Right ventricle myocardium superior (tissue), 1 donor: ENCODE measurements at regions of chr2 and their contacts with region 1.

Region 1: DNA sequence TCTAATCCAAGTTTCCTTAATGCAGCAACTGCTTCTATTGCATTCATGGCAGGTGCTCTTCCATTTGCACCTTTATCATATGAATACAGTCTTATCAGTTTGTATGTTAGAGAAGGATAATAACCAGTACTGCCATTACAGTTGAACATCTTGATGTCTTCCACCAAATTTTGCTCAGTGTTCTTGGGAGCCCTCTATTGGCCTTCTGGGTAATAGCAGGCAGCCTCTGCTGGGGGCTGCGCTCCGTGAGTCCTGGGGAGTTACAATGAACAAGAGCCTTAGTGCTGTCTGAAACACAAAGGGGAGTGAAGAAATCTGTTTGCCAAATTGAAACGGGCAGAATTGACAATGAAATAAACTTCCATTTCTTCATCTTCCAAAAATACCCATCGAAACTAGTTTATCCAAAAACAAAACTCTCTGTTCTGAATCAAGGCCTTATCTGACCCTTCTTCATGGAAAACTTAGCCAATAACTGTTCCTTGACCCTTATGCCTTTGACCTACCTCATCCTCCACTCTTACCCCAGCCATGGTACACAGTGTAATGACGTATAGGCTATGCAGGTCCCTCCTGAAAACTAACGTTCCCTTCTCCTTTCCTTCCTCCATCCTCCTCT is 79.9 kb downstream of the ALK start:
- DNase-seq: no peak
- ATAC-seq: peak; percentile 43

Region 2: DNA sequence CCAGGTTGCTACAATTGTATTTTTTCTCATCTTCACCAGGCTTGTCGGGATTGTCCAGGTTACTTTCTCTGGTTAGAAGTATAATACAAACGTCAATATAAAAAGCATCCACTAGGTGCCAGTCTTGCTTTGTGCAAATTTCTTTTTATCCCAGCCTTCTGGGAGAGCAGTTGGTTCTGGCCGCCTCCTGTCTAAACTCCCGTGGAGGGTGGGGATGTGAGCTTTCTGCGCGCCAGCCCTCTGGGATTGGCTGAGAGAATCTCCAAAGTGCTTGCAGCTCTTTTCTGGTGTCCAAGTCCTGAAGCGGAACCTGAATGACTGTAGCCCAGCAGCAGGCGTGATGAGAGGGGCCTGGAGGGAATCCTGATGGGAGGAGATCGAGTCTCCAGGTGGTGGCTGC is 882.8 kb before region 1 on chr2:
- intact Hi-C with region 1: loop called (anchors 5 kb)
- DNase-seq: peak; percentile 72
- ATAC-seq: peak; percentile 93

Region 3: GRCh38 chr2:29309090-29310029 is 532.1 kb before region 1 on chr2:
- intact Hi-C with region 1: loop called (anchors 5 kb)
- DNase-seq: no peak
- ATAC-seq: peak; percentile 82

Region 4: DNA sequence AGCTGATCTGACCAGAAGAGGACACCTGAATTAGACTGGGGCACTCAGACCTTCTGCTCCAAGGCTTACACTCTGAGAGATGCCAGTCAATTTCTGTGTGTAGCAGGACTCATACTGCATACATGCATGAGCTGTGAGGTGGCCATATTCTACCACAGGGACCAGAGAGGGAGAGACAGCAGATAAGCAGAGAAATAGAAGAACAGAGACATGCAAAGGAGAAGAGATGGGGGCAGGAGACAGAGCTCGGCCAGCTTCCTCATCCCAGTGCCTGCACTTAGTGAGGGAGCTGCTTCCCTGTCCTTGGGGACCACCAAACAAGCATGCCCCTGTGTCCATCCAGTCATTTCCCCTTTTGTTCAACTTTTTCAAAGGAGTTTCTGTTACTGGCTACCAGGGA is 153.7 kb after region 1 on chr2:
- intact Hi-C with region 1: no loop called
- DNase-seq: no peak
- ATAC-seq: no peak

Region 5: GRCh38 chr2:30239308-30239985 is 398.0 kb after region 1 on chr2:
- intact Hi-C with region 1: no loop called
- DNase-seq: peak; percentile 83
- ATAC-seq: peak; percentile 75